Right ventricle myocardium inferior (tissue), 1 donor: ENCODE measurements at regions of chr9 and their contacts with region 1.

Region 1: GRCh38 chr9:121609845-121610570 is 41.4 kb upstream of the DAB2IP start:
- DNase-seq: no peak
- ATAC-seq: peak; percentile 27

Region 2: DNA sequence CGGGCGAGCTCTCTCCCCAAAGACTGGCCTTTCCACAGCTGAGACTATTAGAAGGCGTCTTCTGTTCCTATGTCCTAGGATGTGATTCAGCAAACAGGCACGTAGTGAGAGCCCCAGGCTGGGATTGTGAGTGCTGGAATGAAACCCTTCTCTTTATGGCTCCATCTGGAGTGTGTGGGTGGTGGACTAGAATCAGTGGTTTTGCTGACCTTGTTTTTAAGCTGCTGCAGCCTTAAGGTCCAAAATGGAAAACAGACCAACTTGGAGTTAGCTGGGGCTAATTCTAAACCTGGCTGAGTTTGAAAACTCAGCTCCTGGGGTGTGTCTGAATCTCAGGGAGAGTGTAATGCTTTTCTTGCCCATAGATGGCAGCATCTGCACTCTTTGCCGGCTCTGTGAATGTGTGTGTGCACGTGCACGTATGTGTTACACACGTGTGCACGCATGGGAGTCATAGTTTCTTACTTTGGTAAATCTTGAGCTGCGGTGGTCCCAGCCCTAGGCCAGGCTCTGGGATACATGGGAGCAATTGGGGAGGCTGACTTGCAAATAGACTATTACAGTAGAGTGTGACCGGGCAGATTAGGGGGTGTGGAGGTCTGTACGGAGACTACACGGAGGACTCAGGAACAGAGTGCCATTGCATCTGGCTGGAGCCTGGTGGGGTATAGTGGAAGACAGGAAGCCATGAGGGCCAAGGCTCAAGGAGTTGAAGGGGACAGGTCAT is 331.3 kb before region 1 on chr9:
- intact Hi-C with region 1: loop called (anchors 5 kb)
- DNase-seq: peak; percentile 67
- ATAC-seq: peak; percentile 65

Region 3: DNA sequence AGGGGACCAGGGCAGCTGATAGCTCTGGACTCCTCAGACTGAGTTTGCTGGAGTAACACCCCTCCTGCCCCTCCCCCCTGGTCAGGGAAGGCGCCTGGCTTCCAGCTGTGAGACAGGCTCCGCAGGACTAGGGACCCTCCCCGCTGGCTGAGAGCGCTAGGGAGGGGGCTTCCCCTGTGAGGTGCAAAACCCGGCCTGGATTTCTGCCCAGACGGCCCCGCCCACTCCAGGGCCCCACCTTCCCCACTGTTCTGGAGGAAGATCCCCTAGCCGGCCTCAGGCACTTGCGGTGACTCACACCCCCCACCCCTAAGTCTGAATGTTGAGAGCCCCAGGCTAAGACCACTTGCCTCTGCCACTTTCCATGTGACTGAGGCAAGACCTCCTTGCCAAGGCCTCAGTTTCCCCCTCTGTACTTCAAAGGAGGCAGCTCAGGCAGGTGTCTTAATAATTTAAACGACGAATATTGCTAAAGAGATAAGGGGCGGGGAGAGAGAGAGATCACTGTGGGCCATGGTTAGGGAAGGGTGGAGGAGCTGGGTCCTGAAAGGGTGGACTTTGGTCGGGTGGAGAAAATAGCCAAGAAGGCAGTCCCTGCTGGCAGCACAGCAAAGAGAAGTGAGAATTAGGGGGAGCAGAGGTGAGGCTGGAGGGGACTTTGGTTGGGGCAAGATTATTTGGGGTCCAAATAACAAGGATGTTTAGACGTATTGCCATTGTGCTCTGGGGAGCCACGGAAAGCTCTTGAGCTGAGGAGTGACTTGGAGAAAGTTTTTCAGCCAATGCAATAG is 40.4 kb after region 1 on chr9:
- intact Hi-C with region 1: loop called (anchors 5 kb)
- DNase-seq: no peak
- ATAC-seq: peak; percentile 25

Region 4: GRCh38 chr9:121686930-121687541 is 77.0 kb after region 1 on chr9:
- intact Hi-C with region 1: no loop called
- DNase-seq: peak; percentile 82
- ATAC-seq: peak; percentile 77